WTC11 (cell line): ENCODE measurements at regions of chr5 and their contacts with region 1.

Region 1: GRCh38 chr5:132820162-132820754 is 7.2 kb downstream of the SOWAHA start:
- DNase-seq: peak; percentile 97
- ATAC-seq: peak; percentile 55
- H3K4me3 Mint-ChIP-seq: no peak overlapping the region
- H3K27ac Mint-ChIP-seq: no peak overlapping the region
- H3K4me1 Mint-ChIP-seq: peaks cover 18% of the 10 kb centered on the region
- H3K27me3 Mint-ChIP-seq: peaks cover 66% of the 10 kb centered on the region
- CTCF ChIP-seq: peak; percentile 98

Region 2: GRCh38 chr5:132526290-132526973 is 293.8 kb before region 1 on chr5:
- CTCF ChIA-PET with region 1: interaction called, 23 read pairs
- POLR2A ChIA-PET with region 1: no interaction called
- DNase-seq: peak; percentile 42
- ATAC-seq: peak; percentile 86
- H3K4me3 Mint-ChIP-seq: peak overlapping the region; percentile 52
- H3K27ac Mint-ChIP-seq: no peak overlapping the region
- H3K4me1 Mint-ChIP-seq: no peaks in the 10 kb centered on the region
- H3K27me3 Mint-ChIP-seq: no peaks in the 10 kb centered on the region; the same call in 1 of the 2 replicates
- CTCF ChIP-seq: peak; percentile 89; the same call in 1 of the 2 replicates

Region 3: GRCh38 chr5:132746954-132747615 is 73.2 kb before region 1 on chr5 and contains the start of gene CCNI2:
- CTCF ChIA-PET with region 1: interaction called, 50 read pairs
- POLR2A ChIA-PET with region 1: interaction called, 5 read pairs
- DNase-seq: peak; percentile 73
- ATAC-seq: peak; percentile 81
- H3K4me3 Mint-ChIP-seq: peak within 1 kb of the TSS; percentile 59
- H3K27ac Mint-ChIP-seq: no peak within 1 kb of the TSS
- H3K4me1 Mint-ChIP-seq: peaks cover 4% of the 10 kb centered on the region; the same call in 1 of the 2 replicates
- H3K27me3 Mint-ChIP-seq: peaks cover 66% of the 10 kb centered on the region
- CTCF ChIP-seq: no peak
- total RNA-seq, gene CCNI2: 1.1 to 1.7 TPM (median 1.6 TPM) in 3 replicates

Region 4: GRCh38 chr5:132777209-132778069 is 42.8 kb before region 1 on chr5 and contains the start of gene SEPTIN8:
- CTCF ChIA-PET with region 1: interaction called, 25 read pairs
- POLR2A ChIA-PET with region 1: no interaction called
- DNase-seq: peak; percentile 54
- ATAC-seq: peak; percentile 57
- H3K4me3 Mint-ChIP-seq: peak within 1 kb of the TSS; percentile 67
- H3K27ac Mint-ChIP-seq: no peak within 1 kb of the TSS
- H3K4me1 Mint-ChIP-seq: peaks cover 23% of the 10 kb centered on the region
- H3K27me3 Mint-ChIP-seq: peaks cover 50% of the 10 kb centered on the region
- CTCF ChIP-seq: no peak
- total RNA-seq, gene SEPTIN8: 35.8 to 43.3 TPM (median 38.1 TPM) in 3 replicates

Region 5: DNA sequence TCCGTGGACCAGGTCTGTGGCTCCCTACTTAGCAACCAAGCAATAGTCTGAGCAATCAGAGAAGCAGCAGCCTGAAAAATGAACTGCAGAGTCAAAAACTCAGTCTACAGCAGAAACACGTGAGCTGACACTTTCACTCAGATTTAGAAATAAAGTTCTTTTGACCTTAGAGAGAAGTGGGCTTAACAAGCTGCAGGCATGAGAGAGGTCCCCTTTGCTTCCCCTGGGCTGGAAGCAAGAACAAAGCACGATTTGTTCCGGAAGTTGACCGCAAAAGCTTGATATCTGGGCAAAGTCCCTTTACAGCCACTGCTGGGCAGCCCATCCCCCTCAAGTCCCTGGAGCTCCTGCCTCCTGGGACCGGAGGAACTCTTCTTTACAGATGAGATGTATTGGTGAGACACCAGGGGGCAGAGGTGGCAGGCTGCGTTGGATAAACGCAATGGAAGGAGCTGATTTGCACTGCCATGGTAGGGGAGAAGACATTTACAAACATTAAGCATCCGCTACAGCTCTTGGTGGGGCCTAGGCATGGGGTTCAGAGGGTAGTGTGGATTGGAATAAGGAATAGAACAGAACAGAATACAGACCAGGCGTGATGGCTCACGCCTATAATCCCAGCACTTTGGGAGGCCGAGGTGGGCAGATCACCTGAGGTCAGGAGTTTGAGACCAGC is 13.0 kb before region 1 on chr5:
- CTCF ChIA-PET with region 1: interaction called, 101 read pairs
- POLR2A ChIA-PET with region 1: interaction called, 6 read pairs
- DNase-seq: peak; percentile 67
- ATAC-seq: peak; percentile 99
- H3K4me3 Mint-ChIP-seq: no peak overlapping the region
- H3K27ac Mint-ChIP-seq: no peak overlapping the region
- H3K4me1 Mint-ChIP-seq: peaks cover 16% of the 10 kb centered on the region
- H3K27me3 Mint-ChIP-seq: peaks cover 41% of the 10 kb centered on the region
- CTCF ChIP-seq: no peak

Region 6: GRCh38 chr5:132866342-132867045 is 46.2 kb after region 1 on chr5 and contains the starts of genes GDF9 and UQCRQ:
- CTCF ChIA-PET with region 1: interaction called, 24 read pairs
- POLR2A ChIA-PET with region 1: interaction called, 3 read pairs
- DNase-seq: peak; percentile 97
- ATAC-seq: peak; percentile 99
- H3K4me3 Mint-ChIP-seq: peak within 1 kb of the TSS; percentile 100
- H3K27ac Mint-ChIP-seq: peak within 1 kb of the TSS; percentile 100
- H3K4me1 Mint-ChIP-seq: peaks cover 22% of the 10 kb centered on the region
- H3K27me3 Mint-ChIP-seq: peaks cover 3% of the 10 kb centered on the region; the same call in 1 of the 2 replicates
- CTCF ChIP-seq: no peak
- total RNA-seq, gene GDF9: 0.34 to 0.42 TPM (median 0.37 TPM) in 3 replicates
- total RNA-seq, gene UQCRQ: 244 to 256 TPM (median 244 TPM) in 3 replicates

Region 7: DNA sequence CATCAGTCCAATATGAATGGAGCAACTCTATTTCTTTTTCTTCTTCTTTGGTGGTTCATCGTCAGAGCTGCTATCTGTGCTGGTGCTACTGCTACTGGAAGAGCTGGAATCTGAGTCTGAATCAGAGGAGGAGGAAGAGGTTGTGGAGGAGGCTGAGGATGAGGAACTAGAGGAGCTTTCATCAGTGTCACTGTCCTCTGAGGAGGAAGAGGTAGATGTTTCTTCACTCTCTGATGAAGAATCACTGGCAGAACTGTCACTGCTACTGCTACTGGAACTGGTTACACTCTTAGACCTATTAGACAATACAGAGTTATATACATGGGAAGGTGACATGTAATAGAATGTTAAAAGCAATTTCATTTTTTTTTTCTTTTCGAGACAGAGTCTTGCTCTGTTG is 178.3 kb after region 1 on chr5:
- CTCF ChIA-PET with region 1: no interaction called
- POLR2A ChIA-PET with region 1: no interaction called
- DNase-seq: no peak
- ATAC-seq: no peak
- H3K4me3 Mint-ChIP-seq: no peak overlapping the region
- H3K27ac Mint-ChIP-seq: no peak overlapping the region
- H3K4me1 Mint-ChIP-seq: no peaks in the 10 kb centered on the region
- H3K27me3 Mint-ChIP-seq: no peaks in the 10 kb centered on the region
- CTCF ChIP-seq: no peak